ENCODE measurements at regions of chr18 and their contacts with region 1.

Region 1: GRCh38 chr18:25351777-25352628 is at the start of gene ZNF521:
- DNase-seq: peak; percentile 72
- H3K4me3 ChIP-seq: peak within 1 kb of the TSS; percentile 43 to 55
- H3K27ac ChIP-seq: peak within 1 kb of the TSS; percentile 66 to 70
- H3K4me1 ChIP-seq: no peaks in the 10 kb centered on the region
- H3K27me3 ChIP-seq: no peaks in the 10 kb centered on the region
- CTCF ChIP-seq: no peak
- POLR2A ChIP-seq: no peak
- total RNA-seq, gene ZNF521: 12.7 to 41.5 TPM

Region 2: GRCh38 chr18:24878289-24878688 is 473.7 kb before region 1 on chr18:
- intact Hi-C with region 1: loop called (anchors 5 kb)
- DNase-seq: peak; percentile 14
- H3K4me3 ChIP-seq: no peak overlapping the region
- H3K27ac ChIP-seq: no peak overlapping the region
- H3K4me1 ChIP-seq: no peaks in the 10 kb centered on the region
- H3K27me3 ChIP-seq: no peaks in the 10 kb centered on the region
- CTCF ChIP-seq: peak in 3 of 4 experiments; percentile 32 to 59 (median 34)
- POLR2A ChIP-seq: no peak

Region 3: DNA sequence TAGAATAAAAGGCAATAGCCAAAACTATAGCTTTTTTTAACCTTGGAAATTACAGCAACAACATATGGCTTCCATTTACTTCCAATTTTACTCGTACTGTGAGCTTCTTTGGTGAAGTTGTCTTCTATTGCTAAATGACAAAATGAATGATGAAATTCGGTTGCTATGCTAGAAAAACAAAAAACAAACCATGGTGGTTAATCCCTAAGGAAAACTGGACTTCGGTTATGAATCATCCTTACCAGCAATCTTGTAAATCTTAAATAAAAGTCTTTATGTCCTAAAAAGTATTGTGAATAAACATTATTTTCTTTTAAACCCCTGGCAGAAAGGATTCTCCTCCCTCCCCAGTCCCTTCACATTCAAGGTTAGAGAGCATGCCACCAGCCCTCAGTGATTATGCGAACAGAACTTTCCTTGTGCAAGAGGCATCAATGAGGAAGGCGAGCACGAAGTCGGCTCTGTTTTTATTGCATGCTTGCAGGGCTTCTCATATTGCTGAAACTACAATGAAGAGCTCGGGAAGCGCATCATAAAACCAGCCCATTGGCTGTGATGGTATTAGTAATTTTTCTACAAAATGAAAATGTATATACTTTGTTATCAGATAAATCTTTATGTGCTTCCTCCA is 62.9 kb before region 1 on chr18:
- intact Hi-C with region 1: loop called (anchors 10 kb)
- DNase-seq: no peak
- H3K4me3 ChIP-seq: no peak overlapping the region
- H3K27ac ChIP-seq: no peak overlapping the region
- H3K4me1 ChIP-seq: no peaks in the 10 kb centered on the region
- H3K27me3 ChIP-seq: no peaks in the 10 kb centered on the region
- CTCF ChIP-seq: no peak
- POLR2A ChIP-seq: no peak

Region 4: DNA sequence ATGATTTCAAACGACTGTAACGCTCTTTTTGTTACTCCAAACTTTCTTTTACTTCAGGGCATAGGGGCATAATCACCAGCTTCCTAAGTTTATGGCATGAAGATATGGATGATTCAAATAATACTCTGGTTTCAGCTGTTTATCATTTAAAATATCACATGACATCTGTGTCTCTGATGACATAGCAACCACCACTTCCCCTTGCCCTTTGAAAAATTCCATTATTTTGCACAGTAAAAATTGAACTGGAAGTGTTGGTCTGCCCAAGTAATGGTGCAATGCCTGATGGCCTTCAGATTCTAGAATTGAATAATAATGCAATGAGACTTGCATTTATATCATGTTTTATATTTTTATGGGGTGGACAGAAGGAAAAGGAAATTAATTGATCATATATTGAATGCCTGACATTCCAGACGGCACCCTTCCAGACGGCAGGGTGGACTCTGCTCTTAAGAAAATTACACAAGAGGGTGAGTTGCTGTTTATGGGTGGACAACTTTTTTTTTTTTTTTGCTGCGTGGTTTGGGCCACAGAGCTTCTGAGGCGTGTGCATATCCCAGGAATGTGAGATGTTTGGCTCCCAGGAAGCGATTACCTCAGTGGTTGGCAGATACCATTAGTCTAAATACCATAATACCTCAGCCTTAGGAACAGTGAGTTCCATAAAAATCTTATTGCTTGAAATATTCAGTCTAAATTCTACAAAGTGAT is 101.7 kb after region 1 on chr18:
- intact Hi-C with region 1: loop called (anchors 10 kb)
- DNase-seq: no peak
- H3K4me3 ChIP-seq: no peak overlapping the region
- H3K27ac ChIP-seq: no peak overlapping the region
- H3K4me1 ChIP-seq: no peaks in the 10 kb centered on the region
- H3K27me3 ChIP-seq: no peaks in the 10 kb centered on the region
- CTCF ChIP-seq: no peak
- POLR2A ChIP-seq: no peak

Measured in prostate gland (tissue), 2 donors.